Heart left ventricle (tissue), 16 donors: ENCODE measurements at regions of chr9 and their contacts with region 1.

Region 1: DNA sequence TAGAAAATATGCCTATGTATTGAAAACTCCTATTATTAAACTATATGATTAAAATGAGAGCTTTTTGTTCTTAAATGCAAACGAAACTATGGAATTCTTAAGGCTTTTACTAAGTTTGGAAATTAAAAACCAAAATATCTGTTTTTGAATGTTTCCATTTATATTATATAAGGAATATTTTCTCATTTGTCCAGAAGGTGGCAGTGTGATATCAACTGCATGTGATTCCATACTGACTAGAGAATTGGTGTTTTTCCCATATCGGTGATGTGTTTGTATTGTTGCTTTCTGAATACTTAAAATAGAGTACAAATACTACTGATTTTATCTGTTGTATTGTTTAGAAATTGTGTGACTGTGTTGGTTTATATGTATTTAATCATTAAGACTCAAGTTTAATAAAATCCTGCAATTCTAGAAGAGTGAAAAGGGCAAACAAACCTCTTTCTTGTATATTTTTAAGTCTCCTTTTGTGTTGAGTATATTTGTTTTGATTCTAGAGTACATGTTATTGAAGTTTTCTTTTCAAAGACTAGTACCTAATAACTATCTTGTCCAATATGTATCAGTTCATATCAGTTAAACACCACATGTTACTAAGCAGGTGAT is 320.8 kb downstream of the CCDC171 start:
- DNase-seq: no peak
- ATAC-seq: no peak
- H3K4me3 ChIP-seq: no peak overlapping the region
- H3K27ac ChIP-seq: no peak overlapping the region
- H3K4me1 ChIP-seq: peaks cover 0 to 5% (median 0%) of the 10 kb centered on the region in 12 donors
- H3K27me3 ChIP-seq: no peaks in the 10 kb centered on the region
- CTCF ChIP-seq: peak; percentile 51 to 80 (median 65)
- POLR2A ChIP-seq: no peak

Region 2: DNA sequence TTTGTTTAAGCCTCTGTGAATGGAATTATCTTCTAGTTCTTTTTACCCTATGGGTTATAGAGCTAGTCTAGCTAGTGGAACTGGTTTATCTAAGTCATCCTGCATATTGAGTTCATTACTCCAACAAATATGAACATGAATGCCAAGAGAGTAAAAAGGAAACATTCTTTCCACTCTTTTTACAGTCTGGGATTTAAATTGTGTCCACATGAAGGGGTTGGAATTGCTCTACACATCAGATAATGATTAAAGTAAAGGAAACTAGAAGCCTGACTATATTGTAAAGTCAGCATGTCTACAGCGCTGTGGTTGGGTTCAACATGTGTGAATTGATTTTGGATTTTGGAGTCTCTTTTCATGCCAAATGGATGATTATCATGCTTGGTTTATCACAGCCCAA is 147.7 kb before region 1 on chr9:
- intact Hi-C with region 1: no loop called
- DNase-seq: no peak
- ATAC-seq: no peak
- H3K4me3 ChIP-seq: no peak overlapping the region
- H3K27ac ChIP-seq: no peak overlapping the region
- H3K4me1 ChIP-seq: no peaks in the 10 kb centered on the region
- H3K27me3 ChIP-seq: no peaks in the 10 kb centered on the region
- CTCF ChIP-seq: no peak
- POLR2A ChIP-seq: no peak

Region 3: GRCh38 chr9:15936306-15936921 is 62.7 kb after region 1 on chr9:
- intact Hi-C with region 1: no loop called
- DNase-seq: peak in 4 of 5 donors; percentile 25 to 41 (median 34)
- ATAC-seq: peak; percentile 55 to 93 (median 82)
- H3K4me3 ChIP-seq: no peak overlapping the region
- H3K27ac ChIP-seq: peak overlapping the region in 2 of 12 donors; percentile 26 to 38
- H3K4me1 ChIP-seq: peaks cover 0 to 4% (median 0%) of the 10 kb centered on the region in 12 donors
- H3K27me3 ChIP-seq: no peaks in the 10 kb centered on the region
- CTCF ChIP-seq: no peak
- POLR2A ChIP-seq: no peak

Region 4: GRCh38 chr9:16133556-16134227 is 260.0 kb after region 1 on chr9:
- intact Hi-C with region 1: loop called in 9 of 10 experiments (anchors 2 to 10 kb)
- DNase-seq: peak in 1 of 5 donors; percentile 33
- ATAC-seq: peak in 1 of 4 donors; percentile 39
- H3K4me3 ChIP-seq: no peak overlapping the region
- H3K27ac ChIP-seq: no peak overlapping the region
- H3K4me1 ChIP-seq: peaks cover 0 to 10% (median 0%) of the 10 kb centered on the region in 12 donors
- H3K27me3 ChIP-seq: peaks cover 0 to 3% (median 0%) of the 10 kb centered on the region in 9 donors
- CTCF ChIP-seq: peak in 11 of 12 donors; percentile 32 to 66 (median 53)
- POLR2A ChIP-seq: no peak

Region 5: DNA sequence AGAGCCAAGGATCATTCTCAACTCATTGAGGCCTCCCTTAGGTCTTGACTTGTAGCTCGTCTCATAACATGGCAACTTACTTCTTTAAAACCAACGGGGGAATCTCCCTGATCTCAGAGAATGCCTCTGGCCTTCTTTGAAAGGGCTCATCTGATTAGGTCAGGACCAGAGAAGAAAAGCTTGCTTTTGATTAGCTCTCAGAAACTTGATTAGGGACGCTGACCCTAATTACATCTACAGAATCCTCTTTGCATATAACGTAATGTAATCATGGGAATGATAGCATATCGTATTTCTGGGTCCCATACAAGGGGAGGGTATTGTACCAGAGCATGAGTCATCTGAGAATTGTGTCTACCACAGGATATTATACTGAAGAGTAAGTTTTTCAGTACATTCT is 1580.1 kb after region 1 on chr9:
- intact Hi-C with region 1: loop called in 1 of 10 experiments (anchors 10 kb)
- DNase-seq: no peak
- ATAC-seq: no peak
- H3K4me3 ChIP-seq: no peak overlapping the region
- H3K27ac ChIP-seq: no peak overlapping the region
- H3K4me1 ChIP-seq: no peaks in the 10 kb centered on the region
- H3K27me3 ChIP-seq: no peaks in the 10 kb centered on the region
- CTCF ChIP-seq: no peak
- POLR2A ChIP-seq: no peak

Region 6: GRCh38 chr9:17462869-17463464 is 1589.3 kb after region 1 on chr9:
- intact Hi-C with region 1: loop called in 4 of 10 experiments (anchors 5 to 10 kb)
- DNase-seq: no peak
- ATAC-seq: no peak
- H3K4me3 ChIP-seq: no peak overlapping the region
- H3K27ac ChIP-seq: no peak overlapping the region
- H3K4me1 ChIP-seq: no peaks in the 10 kb centered on the region
- H3K27me3 ChIP-seq: no peaks in the 10 kb centered on the region
- CTCF ChIP-seq: peak; percentile 51 to 88 (median 72)
- POLR2A ChIP-seq: no peak